ENCODE measurements at regions of chr2 and their contacts with region 1.

Region 1: GRCh38 chr2:9799665-9800632 is 43.3 kb upstream of the TAF1B start:
- DNase-seq: peak; percentile 91
- ATAC-seq: peak; percentile 82

Region 2: GRCh38 chr2:10620481-10620880 is 820.5 kb after region 1 on chr2:
- intact Hi-C with region 1: loop called (anchors 10 kb)
- DNase-seq: no peak
- ATAC-seq: no peak

Measured in sciatic nerve (tissue), 2 donors.